ENCODE measurements at regions of chr1 and their contacts with region 1.

Region 1: GRCh38 chr1:245156081-245156735 is 1.4 kb downstream of the KIF26B start:
- DNase-seq: peak; percentile 89
- ATAC-seq: peak; percentile 85
- H3K4me3 ChIP-seq: peak overlapping the region; percentile 65
- H3K27ac ChIP-seq: no peak overlapping the region
- H3K4me1 ChIP-seq: peaks cover 30% of the 10 kb centered on the region
- H3K27me3 ChIP-seq: peaks cover 80% of the 10 kb centered on the region
- CTCF ChIP-seq: peak; percentile 70

Region 2: GRCh38 chr1:244937099-244937498 is 219.1 kb before region 1 on chr1:
- CTCF ChIA-PET with region 1: no interaction called
- POLR2A ChIA-PET with region 1: no interaction called
- intact Hi-C with region 1: no loop called
- DNase-seq: no peak
- ATAC-seq: no peak
- H3K4me3 ChIP-seq: no peak overlapping the region
- H3K27ac ChIP-seq: no peak overlapping the region
- H3K4me1 ChIP-seq: no peaks in the 10 kb centered on the region
- H3K27me3 ChIP-seq: no peaks in the 10 kb centered on the region
- CTCF ChIP-seq: no peak

Region 3: GRCh38 chr1:245079021-245079609 is 77.1 kb before region 1 on chr1:
- CTCF ChIA-PET with region 1: no interaction called
- POLR2A ChIA-PET with region 1: no interaction called
- intact Hi-C with region 1: loop called (anchors 1 kb)
- DNase-seq: peak; percentile 82
- ATAC-seq: peak; percentile 57
- H3K4me3 ChIP-seq: no peak overlapping the region
- H3K27ac ChIP-seq: no peak overlapping the region
- H3K4me1 ChIP-seq: peaks cover 6% of the 10 kb centered on the region; the same call in 1 of the 2 replicates
- H3K27me3 ChIP-seq: no peaks in the 10 kb centered on the region
- CTCF ChIP-seq: peak; percentile 89

Region 4: GRCh38 chr1:245380790-245381535 is 224.8 kb after region 1 on chr1:
- CTCF ChIA-PET with region 1: interaction called, 9 read pairs
- POLR2A ChIA-PET with region 1: no interaction called
- intact Hi-C with region 1: loop called (anchors 2 kb)
- DNase-seq: no peak
- ATAC-seq: no peak
- H3K4me3 ChIP-seq: no peak overlapping the region
- H3K27ac ChIP-seq: no peak overlapping the region
- H3K4me1 ChIP-seq: no peaks in the 10 kb centered on the region
- H3K27me3 ChIP-seq: peaks cover 70% of the 10 kb centered on the region
- CTCF ChIP-seq: peak; percentile 65

Region 5: GRCh38 chr1:245888809-245889208 is 732.6 kb after region 1 on chr1:
- CTCF ChIA-PET with region 1: interaction called, 5 read pairs
- POLR2A ChIA-PET with region 1: no interaction called
- intact Hi-C with region 1: loop called (anchors 10 kb)
- DNase-seq: peak; percentile 77
- ATAC-seq: peak; percentile 84
- H3K4me3 ChIP-seq: no peak overlapping the region
- H3K27ac ChIP-seq: no peak overlapping the region
- H3K4me1 ChIP-seq: no peaks in the 10 kb centered on the region
- H3K27me3 ChIP-seq: no peaks in the 10 kb centered on the region
- CTCF ChIP-seq: peak; percentile 87

Region 6: GRCh38 chr1:246280551-246280950 is 1124.3 kb after region 1 on chr1:
- CTCF ChIA-PET with region 1: interaction called, 12 read pairs
- POLR2A ChIA-PET with region 1: no interaction called
- intact Hi-C with region 1: loop called (anchors 5 kb)
- DNase-seq: peak; percentile 44
- ATAC-seq: peak; percentile 17; the same call in 1 of the 2 replicates
- H3K4me3 ChIP-seq: no peak overlapping the region
- H3K27ac ChIP-seq: peak overlapping the region; percentile 54
- H3K4me1 ChIP-seq: peaks cover 23% of the 10 kb centered on the region
- H3K27me3 ChIP-seq: no peaks in the 10 kb centered on the region
- CTCF ChIP-seq: peak; percentile 67

Region 7: DNA sequence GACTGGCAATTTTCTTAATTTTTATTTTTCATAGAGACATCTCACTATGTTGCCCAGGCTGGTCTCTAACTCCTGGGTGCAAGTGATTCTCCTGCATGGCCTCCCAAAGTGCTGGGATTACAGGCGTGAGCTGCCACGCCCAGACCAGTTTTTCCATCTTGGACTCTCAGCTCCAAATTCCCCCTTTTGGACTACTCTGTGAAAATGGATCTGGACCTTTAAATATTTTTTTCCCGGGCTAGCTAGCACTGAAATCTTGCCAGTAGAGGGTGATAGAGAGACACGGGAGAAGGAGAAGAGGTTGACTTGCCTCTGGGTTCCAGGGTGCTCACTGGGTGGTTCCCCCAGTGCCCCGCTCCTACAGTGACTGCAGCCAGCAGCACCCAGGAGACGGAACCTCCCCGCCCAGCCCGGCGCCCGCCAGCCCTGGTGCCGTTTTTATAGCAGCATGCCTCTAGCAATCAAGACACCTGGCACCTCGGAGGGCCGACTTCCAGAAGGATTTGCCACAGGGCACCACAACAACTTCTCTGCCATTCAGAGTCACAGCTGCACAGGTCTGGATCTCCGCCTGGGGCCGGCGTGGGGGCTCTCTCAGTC is 1533.3 kb after region 1 on chr1:
- CTCF ChIA-PET with region 1: interaction called, 10 read pairs
- POLR2A ChIA-PET with region 1: no interaction called
- intact Hi-C with region 1: no loop called
- DNase-seq: peak; percentile 96
- ATAC-seq: peak; percentile 97
- H3K4me3 ChIP-seq: peak overlapping the region; percentile 63
- H3K27ac ChIP-seq: no peak overlapping the region
- H3K4me1 ChIP-seq: 0 out of 2 replicates have a peak, but pooled peaks cover 5% of the 10 kb centered on the region
- H3K27me3 ChIP-seq: no peaks in the 10 kb centered on the region
- CTCF ChIP-seq: peak; percentile 94

Measured in PC-3 (cell line).